GM12878 (cell line): ENCODE measurements at regions of chr2 and their contacts with region 1.

Region 1: DNA sequence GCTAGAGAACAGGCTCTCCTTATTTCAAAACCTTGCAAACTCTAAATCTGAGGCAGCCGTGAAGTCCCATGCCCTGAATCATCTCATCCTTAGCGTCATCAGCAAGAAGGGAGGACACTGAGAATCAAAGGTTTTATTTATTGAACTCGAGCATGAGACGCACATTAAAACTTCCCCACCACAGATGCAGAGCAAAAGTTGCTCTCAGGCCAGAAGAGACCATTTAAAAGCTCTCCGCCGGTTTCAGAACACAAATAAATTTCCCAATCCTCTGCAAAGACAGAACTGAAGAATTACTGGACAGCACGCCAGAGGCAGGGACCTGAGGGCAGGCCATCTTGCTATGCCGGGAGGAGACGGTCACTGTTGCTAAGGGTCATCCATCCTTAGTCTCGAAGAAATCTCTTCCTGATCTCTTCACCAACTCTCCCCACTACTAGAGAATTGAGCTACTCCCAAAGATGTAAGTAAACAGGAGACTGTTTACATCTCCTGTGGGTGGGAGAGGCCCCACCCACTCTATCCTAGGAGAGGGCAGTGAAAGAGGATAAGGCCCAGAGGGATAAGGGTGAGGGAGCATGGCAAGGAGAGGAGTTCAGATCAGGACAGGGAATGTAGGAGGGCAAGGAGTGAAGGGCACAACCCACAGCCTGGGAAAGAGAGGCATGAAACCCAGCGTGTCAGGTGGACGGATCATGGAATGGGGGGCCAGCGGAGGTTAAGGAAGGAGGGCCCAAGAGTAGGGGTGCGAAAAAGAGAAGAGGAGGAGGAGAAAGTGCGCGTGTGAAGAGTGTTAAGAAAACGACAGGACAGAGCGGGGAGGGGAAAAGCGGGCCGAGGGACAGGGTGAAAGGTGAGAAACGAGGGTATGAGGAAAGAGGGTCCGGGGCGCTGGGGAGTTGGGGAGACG is 1.1 kb downstream of the AMMECR1L start:
- DNase-seq: no peak
- ATAC-seq: no peak
- H3K4me3 ChIP-seq: peak overlapping the region; percentile 79
- H3K27ac ChIP-seq: 0 out of 2 replicates have a peak overlapping the region, but pooled peaks have one; percentile 29
- H3K4me1 ChIP-seq: peaks cover 4% of the 10 kb centered on the region; the same call in 1 of the 2 replicates
- H3K27me3 ChIP-seq: no peaks in the 10 kb centered on the region
- CTCF ChIP-seq: no peak
- EP300 ChIP-seq: no peak
- POLR2A ChIP-seq: no peak
- RAD21 ChIP-seq: no peak

Region 2: DNA sequence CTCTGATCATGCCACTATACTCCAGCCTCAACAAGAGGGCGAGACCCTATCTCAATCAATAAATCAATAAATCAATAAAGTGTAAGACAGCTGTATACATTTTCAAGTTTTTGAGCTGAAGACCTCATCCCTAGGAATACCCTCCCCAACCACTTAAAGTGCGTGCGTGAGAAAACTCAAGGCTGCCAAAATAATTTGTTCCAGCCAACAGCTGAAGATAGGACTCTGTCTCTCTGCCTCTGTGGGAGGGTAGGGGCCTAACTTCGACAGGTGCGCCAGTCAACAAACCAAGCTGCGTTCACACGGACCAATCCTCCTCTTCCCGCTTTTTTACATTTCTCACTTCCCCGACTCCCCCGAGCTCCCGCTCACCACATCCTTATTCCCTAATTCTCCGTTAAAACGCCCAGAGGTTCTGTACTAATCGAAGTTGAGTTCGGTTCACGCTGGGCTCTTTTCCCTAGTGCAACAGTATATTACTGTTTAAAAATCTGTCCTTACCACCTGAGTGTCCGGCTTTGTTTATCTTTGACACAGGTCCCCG is 27.4 kb before region 1 on chr2:
- CTCF ChIA-PET with region 1: interaction called, 4 read pairs
- POLR2A ChIA-PET with region 1: interaction called, 7 read pairs
- RAD21 ChIA-PET with region 1: no interaction called
- SMC1A ChIA-PET with region 1: interaction called, 19 read pairs
- in situ Hi-C with region 1: no loop called
- intact Hi-C with region 1: no loop called
- DNase-seq: no peak
- ATAC-seq: peak; percentile 43
- H3K4me3 ChIP-seq: peak overlapping the region; percentile 93
- H3K27ac ChIP-seq: peak overlapping the region; percentile 65
- H3K4me1 ChIP-seq: 0 out of 2 replicates have a peak, but pooled peaks cover 2% of the 10 kb centered on the region
- H3K27me3 ChIP-seq: no peaks in the 10 kb centered on the region
- CTCF ChIP-seq: no peak
- EP300 ChIP-seq: no peak
- POLR2A ChIP-seq: no peak
- RAD21 ChIP-seq: no peak

Region 3: GRCh38 chr2:127932199-127932878 is 47.6 kb after region 1 on chr2:
- CTCF ChIA-PET with region 1: no interaction called
- POLR2A ChIA-PET with region 1: no interaction called
- RAD21 ChIA-PET with region 1: no interaction called
- SMC1A ChIA-PET with region 1: no interaction called
- in situ Hi-C with region 1: no loop called
- intact Hi-C with region 1: no loop called
- DNase-seq: no peak
- ATAC-seq: no peak
- H3K4me3 ChIP-seq: no peak overlapping the region
- H3K27ac ChIP-seq: no peak overlapping the region
- H3K4me1 ChIP-seq: no peaks in the 10 kb centered on the region
- H3K27me3 ChIP-seq: no peaks in the 10 kb centered on the region
- CTCF ChIP-seq: no peak
- EP300 ChIP-seq: no peak
- POLR2A ChIP-seq: no peak
- RAD21 ChIP-seq: no peak

Region 4: DNA sequence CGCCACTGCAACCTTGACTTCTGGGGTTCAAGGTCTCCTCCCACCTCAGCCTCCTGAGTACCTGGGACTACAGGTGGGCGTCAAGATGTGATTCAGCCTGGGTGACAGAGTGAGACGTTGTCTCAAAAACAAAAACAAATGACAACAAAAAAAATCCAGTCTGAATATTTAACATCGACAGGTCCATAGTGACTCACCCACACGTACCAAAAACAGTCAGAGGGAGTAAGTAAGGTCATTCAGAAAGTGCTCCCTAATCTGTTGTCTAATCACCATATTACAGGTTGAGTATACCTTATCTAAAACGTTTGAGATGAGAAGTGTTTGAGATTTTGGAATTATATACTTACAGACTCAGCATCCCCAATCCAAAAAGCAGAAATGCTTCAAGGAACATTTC is 118.8 kb after region 1 on chr2:
- CTCF ChIA-PET with region 1: no interaction called
- POLR2A ChIA-PET with region 1: no interaction called
- RAD21 ChIA-PET with region 1: no interaction called
- SMC1A ChIA-PET with region 1: no interaction called
- in situ Hi-C with region 1: no loop called
- intact Hi-C with region 1: no loop called
- DNase-seq: no peak
- ATAC-seq: no peak
- H3K4me3 ChIP-seq: no peak overlapping the region
- H3K27ac ChIP-seq: no peak overlapping the region
- H3K4me1 ChIP-seq: no peaks in the 10 kb centered on the region
- H3K27me3 ChIP-seq: no peaks in the 10 kb centered on the region
- CTCF ChIP-seq: no peak
- EP300 ChIP-seq: no peak
- POLR2A ChIP-seq: no peak
- RAD21 ChIP-seq: no peak